HEK293T (cell line): ENCODE measurements at regions of chr5 and their contacts with region 1.

Region 1: GRCh38 chr5:86968301-86968753 is 299.4 kb upstream of the RASA1 start:
- DNase-seq: no peak

Region 2: GRCh38 chr5:86880785-86881492 is 87.4 kb before region 1 on chr5:
- CTCF ChIA-PET with region 1: interaction called, 12 read pairs
- POLR2A ChIA-PET with region 1: no interaction called
- DNase-seq: peak; percentile 66